ENCODE measurements at regions of chr6 and their contacts with region 1.

Region 1: DNA sequence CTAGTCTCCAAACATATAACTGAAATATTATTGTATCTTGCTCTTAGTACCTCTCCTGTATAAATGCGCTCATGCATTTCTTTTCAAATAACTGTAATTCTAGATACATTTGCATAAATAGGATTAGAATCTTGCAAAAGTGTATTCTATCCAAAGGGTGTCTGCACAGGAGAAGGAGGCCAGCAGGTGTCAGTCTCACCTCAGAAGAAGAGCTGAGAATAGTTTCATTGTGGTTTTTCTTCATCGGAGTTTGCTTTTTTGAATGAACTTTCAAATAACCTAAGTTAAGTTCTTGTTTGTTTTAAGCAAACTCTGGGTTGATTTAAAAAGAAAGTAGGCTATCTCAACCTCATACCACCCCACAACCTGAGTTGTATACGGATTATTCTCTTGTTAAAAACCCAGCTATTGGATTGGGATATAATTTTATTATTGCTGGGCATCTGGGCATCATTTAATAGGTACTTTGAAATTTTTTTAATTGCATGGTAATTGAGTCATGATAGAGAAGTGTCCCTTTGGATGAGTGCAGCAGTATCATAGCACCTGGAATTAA is 125.0 kb upstream of the MLIP start:
- DNase-seq: peak; percentile 29 to 64 (median 63)
- H3K4me3 ChIP-seq: no peak overlapping the region
- H3K27ac ChIP-seq: no peak overlapping the region
- H3K4me1 ChIP-seq: no peaks in the 10 kb centered on the region
- H3K27me3 ChIP-seq: peaks cover 0 to 6% (median 0%) of the 10 kb centered on the region in 5 experiments

Region 2: DNA sequence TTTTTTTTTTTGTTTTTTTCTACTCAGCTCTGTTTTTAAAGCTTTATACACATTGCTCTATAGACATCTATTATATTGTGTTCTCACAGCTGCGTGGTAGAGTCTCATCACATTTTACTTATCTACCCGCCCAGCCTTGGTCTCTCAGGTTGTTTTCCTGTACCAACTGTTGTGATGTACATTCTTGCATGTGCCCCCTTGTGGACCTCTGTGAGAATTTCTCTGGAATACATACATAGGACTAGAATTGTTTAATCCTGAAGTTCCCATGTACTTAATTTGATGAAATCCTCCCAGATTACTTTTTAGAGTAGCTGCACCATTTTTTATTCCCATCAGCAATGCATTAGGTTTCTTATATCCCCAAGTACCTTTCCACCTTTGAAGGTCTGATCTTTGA is 281.6 kb after region 1 on chr6:
- CTCF ChIA-PET with region 1: interaction called, 24 read pairs
- POLR2A ChIA-PET with region 1: no interaction called
- DNase-seq: peak; percentile 22 to 50 (median 49)
- H3K4me3 ChIP-seq: no peak overlapping the region
- H3K27ac ChIP-seq: no peak overlapping the region
- H3K4me1 ChIP-seq: no peaks in the 10 kb centered on the region
- H3K27me3 ChIP-seq: peaks cover 0 to 5% (median 0%) of the 10 kb centered on the region in 5 experiments

Region 3: GRCh38 chr6:54273214-54273820 is 287.1 kb after region 1 on chr6:
- CTCF ChIA-PET with region 1: interaction called, 24 read pairs
- POLR2A ChIA-PET with region 1: interaction called, 4 read pairs
- DNase-seq: no peak
- H3K4me3 ChIP-seq: no peak overlapping the region
- H3K27ac ChIP-seq: no peak overlapping the region
- H3K4me1 ChIP-seq: no peaks in the 10 kb centered on the region
- H3K27me3 ChIP-seq: peaks cover 0 to 5% (median 0%) of the 10 kb centered on the region in 5 experiments

Measured in common myeloid progenitor, CD34-positive (primary cell).